SK-N-SH (cell line): ENCODE measurements at regions of chr17 and their contacts with region 1.

Region 1: DNA sequence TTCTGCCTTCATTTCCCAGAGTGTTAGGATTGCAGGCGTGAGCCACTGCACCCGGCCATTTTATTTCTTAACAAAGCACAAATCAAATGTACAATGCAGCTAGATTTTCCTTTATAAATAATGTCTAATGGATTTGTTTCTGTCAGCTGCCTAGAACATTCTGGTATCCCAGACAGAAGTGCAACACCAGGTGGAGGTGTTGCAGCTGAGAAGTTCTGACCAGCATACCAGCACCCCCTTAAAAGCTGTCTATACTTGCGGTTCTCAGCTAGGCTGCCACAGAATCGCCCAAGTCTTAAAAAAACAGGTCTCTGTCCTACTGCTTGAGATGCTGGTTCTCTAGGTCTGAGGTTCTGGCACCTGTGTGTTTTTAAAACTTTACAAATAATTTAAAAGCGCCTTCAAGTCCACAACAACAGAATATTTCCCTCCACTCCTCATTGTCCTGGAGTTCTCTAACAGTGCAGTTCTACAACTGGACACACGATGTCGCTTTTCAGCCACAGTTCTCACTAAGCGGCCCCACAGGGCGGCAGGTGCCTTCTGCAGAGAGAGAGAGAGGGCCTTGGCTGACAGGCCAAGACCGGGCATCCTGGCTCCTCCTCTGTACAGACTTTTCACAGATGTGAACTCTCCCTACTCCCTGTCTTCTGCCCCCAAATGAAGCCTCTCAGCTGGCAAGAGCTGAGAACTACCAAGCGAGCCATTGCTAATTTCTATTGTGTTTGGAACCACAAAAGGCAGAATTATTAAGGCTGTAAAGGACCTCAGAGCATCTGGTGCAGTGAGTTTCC is 32.6 kb upstream of the MEOX1 start:
- DNase-seq: peak; percentile 86
- H3K4me3 ChIP-seq: peak overlapping the region in 1 of 2 experiments; percentile 39; a peak in 1 of 4 replicates
- H3K27ac ChIP-seq: no peak overlapping the region
- H3K4me1 ChIP-seq: peaks cover 5 to 7% of the 10 kb centered on the region in 2 experiments; a peak in 2 of 4 replicates
- H3K27me3 ChIP-seq: no peaks in the 10 kb centered on the region
- CTCF ChIP-seq: peak; percentile 96
- EP300 ChIP-seq: no peak
- RAD21 ChIP-seq: peak; percentile 99

Region 2: GRCh38 chr17:43591779-43592562 is 102.3 kb before region 1 on chr17:
- CTCF ChIA-PET with region 1: no interaction called
- POLR2A ChIA-PET with region 1: no interaction called
- DNase-seq: peak; percentile 52
- H3K4me3 ChIP-seq: no peak overlapping the region
- H3K27ac ChIP-seq: peak overlapping the region; percentile 60 to 94
- H3K4me1 ChIP-seq: peaks cover 6 to 22% of the 10 kb centered on the region in 2 experiments; a peak in 3 of 4 replicates
- H3K27me3 ChIP-seq: no peaks in the 10 kb centered on the region
- CTCF ChIP-seq: no peak
- EP300 ChIP-seq: peak in 1 of 2 experiments; percentile 68; a peak in 2 of 4 replicates
- RAD21 ChIP-seq: no peak

Region 3: DNA sequence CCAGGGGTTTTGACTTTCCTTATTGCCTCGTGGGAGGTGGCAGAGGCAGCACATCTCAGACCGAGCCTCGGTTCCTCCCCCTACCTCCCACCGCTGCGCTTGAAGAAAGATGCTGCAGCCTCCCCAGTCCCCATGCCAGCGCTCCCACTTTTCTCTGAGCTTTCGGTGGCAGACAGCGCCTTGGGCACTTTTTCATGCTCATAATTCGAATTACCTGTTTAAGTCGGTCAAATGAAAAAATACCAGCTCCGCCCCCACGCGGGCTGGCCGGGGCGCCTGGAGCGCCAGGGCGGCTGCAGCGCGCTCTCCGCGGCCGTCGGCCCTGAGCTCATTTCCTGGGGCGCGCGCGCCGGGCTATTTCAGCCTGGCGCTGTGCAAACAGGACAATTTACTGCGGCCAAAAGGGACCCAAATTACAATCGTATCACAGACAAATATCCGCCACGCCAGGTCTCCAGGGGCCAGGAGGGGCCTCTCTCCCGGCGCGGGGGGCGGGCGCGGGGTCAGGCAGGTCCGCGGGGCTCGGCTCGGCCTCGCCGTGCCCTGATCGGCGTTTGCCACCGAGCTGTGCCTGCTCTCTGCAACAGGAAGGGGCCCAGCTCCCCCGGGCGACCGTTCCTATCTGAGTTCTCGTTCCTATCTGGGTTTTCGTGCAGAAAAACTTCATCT is 19.4 kb after region 1 on chr17:
- CTCF ChIA-PET with region 1: interaction called, 123 read pairs
- POLR2A ChIA-PET with region 1: no interaction called
- DNase-seq: peak; percentile 88
- H3K4me3 ChIP-seq: peak overlapping the region; percentile 46 to 56
- H3K27ac ChIP-seq: no peak overlapping the region
- H3K4me1 ChIP-seq: peaks cover 0 to 2% of the 10 kb centered on the region in 2 experiments; a peak in 1 of 4 replicates
- H3K27me3 ChIP-seq: no peaks in the 10 kb centered on the region
- CTCF ChIP-seq: no peak
- EP300 ChIP-seq: no peak
- RAD21 ChIP-seq: no peak

Region 4: DNA sequence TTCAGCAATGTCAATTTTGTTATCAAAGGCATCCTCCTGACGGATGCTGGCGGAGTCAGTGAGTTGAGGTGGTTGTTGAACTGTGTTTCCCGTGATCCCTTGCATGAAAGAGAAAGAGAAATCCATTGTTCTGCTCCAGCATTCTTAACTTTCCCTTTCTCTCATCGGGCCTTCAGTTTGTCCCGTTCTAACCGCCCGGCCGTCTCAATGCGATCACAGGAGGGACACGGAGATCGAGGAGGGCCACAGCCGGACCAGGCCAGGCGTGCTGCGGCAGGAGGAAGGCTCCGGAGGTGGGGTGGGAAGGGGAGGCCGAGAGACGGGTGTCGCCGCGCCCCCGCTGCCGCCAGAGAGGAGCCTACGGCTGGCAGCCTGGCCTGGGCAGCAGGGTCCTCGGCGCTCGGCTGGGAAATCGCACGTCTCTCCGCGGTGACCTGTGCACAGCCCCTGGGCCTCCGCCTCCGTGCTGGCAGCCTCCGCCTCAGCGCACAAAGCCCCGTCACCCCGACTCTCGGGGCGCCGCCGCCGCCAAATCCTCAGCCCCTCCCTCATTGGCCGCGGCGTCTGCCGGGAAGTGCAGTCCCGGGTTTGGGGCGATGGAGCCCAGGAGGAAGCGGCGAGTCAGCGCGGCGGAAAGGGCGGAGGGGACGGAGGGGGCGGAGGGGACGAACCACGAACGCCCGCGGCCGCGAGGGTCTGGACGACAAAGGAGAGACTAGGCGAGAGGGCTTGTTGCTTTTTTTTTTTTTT is 26.2 kb after region 1 on chr17:
- CTCF ChIA-PET with region 1: interaction called, 123 read pairs
- POLR2A ChIA-PET with region 1: no interaction called
- DNase-seq: peak; percentile 93
- H3K4me3 ChIP-seq: peak overlapping the region; percentile 47 to 51
- H3K27ac ChIP-seq: peak overlapping the region in 1 of 2 experiments; percentile 60; a peak in 1 of 4 replicates
- H3K4me1 ChIP-seq: peaks cover 4 to 5% of the 10 kb centered on the region in 2 experiments; a peak in 2 of 4 replicates
- H3K27me3 ChIP-seq: no peaks in the 10 kb centered on the region
- CTCF ChIP-seq: no peak
- EP300 ChIP-seq: no peak
- RAD21 ChIP-seq: no peak

Region 5: DNA sequence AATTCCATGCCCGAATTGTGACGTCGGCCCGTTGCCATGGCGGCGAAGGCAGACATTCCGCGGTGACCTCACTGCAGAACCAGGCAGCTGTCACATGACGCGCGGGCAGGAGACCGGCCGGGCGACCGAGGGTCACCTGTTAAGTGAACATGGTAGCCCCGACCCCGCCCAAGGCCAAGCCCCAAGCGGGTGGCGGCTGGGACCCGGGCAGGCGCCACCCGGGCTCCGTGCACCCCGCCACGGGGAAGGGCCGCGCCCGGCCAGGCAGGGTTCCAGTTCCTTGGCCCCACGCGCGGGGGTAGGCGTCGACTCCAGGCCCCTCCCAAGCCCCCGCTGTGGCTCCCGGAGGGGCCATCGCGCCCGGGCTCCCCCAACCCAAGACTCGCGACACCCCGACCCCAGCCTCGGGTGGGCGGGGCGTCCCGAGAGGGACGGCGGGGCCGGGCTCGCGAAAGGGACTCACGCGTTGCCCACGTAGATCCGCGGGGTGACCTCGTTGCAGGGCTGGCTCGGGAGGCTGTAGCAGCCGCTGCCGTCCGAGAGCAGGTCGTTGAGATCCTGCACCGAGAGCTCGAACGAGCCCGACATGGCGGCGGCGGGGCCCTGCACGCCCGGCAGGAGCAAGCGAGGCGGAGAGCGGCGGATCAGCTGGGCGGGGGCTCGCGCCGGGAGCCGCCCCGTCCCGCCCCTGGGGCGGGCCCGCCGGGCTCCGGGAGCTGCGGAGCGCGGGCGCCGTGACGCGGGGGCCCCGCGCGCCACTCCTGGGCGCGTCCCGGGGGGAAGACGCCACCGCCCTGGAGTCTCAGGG is 84.3 kb after region 1 on chr17 and contains the start of gene DUSP3:
- CTCF ChIA-PET with region 1: interaction called, 17 read pairs
- POLR2A ChIA-PET with region 1: no interaction called
- DNase-seq: peak; percentile 97
- H3K4me3 ChIP-seq: peak within 1 kb of the TSS; percentile 77 to 84
- H3K27ac ChIP-seq: peak within 1 kb of the TSS; percentile 90 to 95
- H3K4me1 ChIP-seq: peaks cover 8% of the 10 kb centered on the region in 2 experiments; a peak in 1 of 4 replicates
- H3K27me3 ChIP-seq: no peaks in the 10 kb centered on the region
- CTCF ChIP-seq: no peak
- EP300 ChIP-seq: no peak
- RAD21 ChIP-seq: no peak
- polyA plus RNA-seq, gene DUSP3: 31.5 and 39.7 TPM in 2 replicates

Region 6: GRCh38 chr17:43823350-43824084 is 129.2 kb after region 1 on chr17:
- CTCF ChIA-PET with region 1: no interaction called
- POLR2A ChIA-PET with region 1: no interaction called
- DNase-seq: no peak
- H3K4me3 ChIP-seq: no peak overlapping the region
- H3K27ac ChIP-seq: no peak overlapping the region
- H3K4me1 ChIP-seq: peaks cover 0 to 5% of the 10 kb centered on the region in 2 experiments; a peak in 1 of 4 replicates
- H3K27me3 ChIP-seq: no peaks in the 10 kb centered on the region
- CTCF ChIP-seq: no peak
- EP300 ChIP-seq: no peak
- RAD21 ChIP-seq: no peak